GM13977 (cell line): ENCODE measurements at regions of chr11 and their contacts with region 1.

Region 1: DNA sequence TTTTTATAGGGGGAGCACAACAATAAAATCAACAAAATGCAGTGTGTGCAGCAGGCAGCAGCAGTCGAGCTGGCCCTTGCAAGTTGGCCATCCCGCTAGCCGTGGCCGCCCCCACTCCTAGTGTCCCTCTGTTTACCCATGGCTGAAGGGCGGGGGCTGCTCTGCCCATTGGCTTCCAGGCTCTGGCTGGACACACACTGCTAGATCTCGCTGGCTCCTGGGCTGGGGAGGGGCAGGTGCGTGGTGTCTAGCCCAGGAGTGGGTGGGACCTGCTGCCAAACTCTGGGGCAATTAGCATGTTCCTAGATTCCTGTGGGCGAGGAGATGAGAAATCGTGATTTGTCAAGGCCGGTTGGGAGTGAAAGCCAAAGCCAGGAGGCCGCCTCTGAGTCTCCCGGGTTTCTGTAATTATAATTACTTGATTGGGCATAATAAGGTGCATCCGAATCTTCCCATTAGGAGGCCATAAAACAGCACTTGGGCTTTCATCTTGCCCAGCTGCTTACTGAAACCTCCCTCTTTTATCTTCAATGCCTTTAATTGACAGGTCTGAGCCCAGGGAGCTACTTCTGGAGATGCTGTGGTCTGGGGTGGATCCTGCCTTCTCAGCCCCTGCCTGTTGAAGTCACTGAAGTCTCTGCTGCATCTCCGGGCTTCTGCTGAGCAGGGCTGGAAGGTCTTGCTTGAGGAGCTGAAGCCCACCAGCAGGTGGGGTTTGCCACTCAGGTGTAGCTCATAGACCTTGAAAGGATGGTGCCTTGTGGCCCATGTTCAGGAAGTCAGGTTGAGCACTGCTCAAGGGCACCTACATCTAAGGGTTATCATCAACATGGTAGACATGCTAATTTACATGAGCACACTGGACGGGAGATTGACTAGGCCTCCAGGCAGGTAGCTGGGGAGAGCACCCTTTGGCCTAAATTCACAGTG is 44.5 kb upstream of the DKK3 start:
- DNase-seq: peak; percentile 3
- CTCF ChIP-seq: no peak

Region 2: DNA sequence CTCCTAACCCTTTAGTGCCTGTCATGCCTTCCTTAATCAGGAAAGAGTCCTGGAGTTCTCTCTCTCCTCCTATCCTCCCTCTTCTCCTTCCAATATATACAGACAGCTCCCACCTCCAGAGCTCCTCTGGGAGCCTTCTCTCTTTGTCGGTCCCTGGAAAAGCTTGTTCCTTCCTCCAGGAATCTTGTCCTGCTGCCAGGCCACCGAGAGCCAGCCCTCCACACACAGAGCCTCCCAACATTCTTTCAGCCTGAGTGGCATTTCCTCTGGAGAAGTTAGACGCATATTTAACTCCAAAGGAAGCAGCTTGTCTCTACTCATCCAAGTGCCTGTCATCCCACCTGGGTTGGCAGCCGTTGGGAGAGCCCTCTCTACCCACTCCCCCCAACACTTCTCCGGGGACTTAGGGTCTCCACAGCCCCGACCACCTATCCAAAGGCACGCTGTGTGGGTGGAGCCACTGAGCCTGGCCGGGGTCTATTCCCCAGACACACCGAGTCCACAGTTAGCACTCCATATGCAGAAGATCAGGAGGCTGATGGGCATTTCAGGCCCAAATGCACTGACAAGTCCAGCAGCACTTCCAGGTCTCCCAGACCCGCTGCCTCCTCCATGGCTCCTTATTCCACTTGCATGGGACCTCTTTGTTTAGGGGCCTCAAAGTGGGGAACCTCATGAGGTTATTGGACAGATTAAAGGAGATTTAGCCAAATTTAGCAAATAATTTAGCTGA is 75.6 kb before region 1 on chr11:
- in situ Hi-C with region 1: no loop called
- DNase-seq: no peak
- CTCF ChIP-seq: no peak

Region 3: GRCh38 chr11:12269104-12269441 is 216.1 kb after region 1 on chr11:
- in situ Hi-C with region 1: loop called (anchors 10 kb)
- DNase-seq: no peak
- CTCF ChIP-seq: no peak

Region 4: DNA sequence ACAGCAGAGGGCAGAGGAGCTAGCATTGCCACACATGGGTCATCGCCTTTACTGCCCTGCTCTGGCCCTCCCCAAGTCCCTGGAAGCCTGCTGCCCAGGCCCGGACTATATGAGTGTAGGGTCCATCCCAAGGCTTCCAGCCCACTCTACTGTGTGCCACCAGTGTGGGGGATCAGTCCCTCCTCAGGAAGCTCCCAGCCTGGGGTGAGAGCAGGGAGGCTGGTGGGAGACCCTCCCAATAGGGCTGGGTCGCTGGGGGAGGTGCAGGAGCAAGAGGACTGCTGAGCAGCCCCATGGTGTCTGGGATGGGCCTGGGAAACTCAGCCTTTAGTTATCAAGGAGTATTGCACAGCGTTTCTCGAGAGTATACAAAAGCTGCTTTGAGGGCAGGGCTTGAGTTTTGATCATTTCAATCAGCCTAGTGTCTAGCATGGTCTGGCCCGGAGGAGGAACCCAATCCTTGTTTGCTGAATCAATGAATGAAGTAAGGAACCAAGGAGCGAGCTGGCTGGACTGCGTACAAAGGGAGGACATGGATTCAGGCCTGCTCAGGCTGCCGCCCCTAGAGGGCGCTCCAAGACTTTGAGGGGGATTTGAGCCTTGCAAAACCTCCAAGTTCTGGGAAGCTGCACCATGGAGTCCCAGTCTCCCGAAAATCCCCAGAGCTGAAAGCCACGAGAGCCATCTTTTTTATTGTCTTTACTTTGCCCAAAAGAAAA is 235.4 kb after region 1 on chr11:
- in situ Hi-C with region 1: loop called (anchors 5 kb)
- DNase-seq: peak; percentile 74
- CTCF ChIP-seq: peak; percentile 90

Region 5: DNA sequence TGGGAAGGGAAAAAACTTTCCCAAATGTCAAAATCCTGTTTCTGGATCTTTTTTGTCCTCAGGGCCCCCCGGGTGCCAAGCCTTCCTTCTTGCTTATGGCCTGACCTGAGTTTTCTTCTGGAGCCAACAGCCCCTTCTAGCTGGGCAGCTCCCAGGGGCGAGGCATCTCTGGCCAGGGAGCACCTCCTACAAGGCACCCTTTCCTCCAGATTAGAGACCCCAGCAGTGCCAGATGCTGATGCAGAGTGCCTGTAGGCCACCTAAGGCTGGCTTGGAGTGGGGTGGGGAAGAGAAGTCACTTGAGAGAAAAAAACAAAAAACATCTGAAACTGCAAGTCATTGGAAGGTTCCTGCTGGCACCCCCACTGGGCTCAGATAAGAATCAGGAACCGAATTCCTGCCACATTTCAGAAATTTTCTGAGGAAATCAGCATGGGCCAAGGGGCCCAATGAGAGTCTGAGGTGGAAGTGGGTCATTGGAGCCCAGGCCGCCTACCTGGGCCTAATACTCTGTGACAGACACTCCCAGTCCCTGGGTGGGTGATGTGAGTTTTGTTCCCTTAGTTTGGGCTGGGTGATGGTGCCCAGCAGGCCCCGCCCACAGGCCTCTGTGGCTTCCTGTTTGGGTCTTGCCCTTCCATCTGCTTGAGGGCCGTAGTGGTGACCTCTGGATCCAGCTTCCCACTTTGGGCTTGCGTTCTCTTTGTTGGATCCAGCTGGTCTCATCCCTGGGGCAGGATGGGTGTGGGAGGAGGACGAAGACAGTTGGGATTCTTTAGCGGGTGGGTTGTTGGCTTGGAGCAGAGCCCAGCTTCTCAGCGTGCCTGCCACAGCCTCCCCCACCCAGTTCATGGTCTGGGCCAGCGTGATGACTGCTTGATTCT is 365.0 kb after region 1 on chr11:
- in situ Hi-C with region 1: no loop called
- DNase-seq: no peak
- CTCF ChIP-seq: no peak